GM10248 (cell line): ENCODE measurements at regions of chr20 and their contacts with region 1.

Region 1: GRCh38 chr20:23110970-23111945 is 25.1 kb upstream of the CD93 start:
- DNase-seq: no peak
- CTCF ChIP-seq: no peak

Region 2: GRCh38 chr20:23009636-23010035 is 101.6 kb before region 1 on chr20:
- CTCF ChIA-PET with region 1: no interaction called
- POLR2A ChIA-PET with region 1: no interaction called
- DNase-seq: no peak
- CTCF ChIP-seq: no peak

Region 3: DNA sequence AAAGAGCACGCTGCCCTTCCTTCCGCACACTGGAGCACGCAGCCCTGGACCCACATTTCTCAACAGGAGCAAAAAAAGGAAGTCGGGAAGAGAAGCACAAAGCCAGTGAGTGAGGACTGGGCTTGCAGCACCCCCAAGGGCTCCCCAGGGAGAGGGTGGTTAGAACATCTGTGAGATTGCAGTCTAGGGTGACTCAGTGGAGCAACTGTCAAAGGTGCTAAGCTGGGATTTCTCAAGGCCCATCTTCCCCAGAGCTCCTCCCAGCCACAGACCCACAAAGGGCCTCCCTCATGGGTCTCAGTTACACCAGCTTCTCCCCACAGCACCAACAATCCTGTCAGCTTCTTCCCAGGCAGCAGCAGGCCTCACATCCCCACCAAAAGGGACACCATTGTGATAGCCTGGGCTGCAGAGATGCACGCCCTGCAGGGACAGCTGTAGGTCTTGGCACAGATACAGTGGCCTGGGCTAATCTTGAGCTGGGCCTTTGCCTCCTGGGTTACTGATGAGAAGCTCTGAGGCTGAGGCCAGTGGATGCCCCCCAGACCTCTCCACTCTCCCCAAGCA is 14.4 kb after region 1 on chr20:
- CTCF ChIA-PET with region 1: interaction called, 10 read pairs
- POLR2A ChIA-PET with region 1: no interaction called
- DNase-seq: peak; percentile 40
- CTCF ChIP-seq: no peak

Region 4: DNA sequence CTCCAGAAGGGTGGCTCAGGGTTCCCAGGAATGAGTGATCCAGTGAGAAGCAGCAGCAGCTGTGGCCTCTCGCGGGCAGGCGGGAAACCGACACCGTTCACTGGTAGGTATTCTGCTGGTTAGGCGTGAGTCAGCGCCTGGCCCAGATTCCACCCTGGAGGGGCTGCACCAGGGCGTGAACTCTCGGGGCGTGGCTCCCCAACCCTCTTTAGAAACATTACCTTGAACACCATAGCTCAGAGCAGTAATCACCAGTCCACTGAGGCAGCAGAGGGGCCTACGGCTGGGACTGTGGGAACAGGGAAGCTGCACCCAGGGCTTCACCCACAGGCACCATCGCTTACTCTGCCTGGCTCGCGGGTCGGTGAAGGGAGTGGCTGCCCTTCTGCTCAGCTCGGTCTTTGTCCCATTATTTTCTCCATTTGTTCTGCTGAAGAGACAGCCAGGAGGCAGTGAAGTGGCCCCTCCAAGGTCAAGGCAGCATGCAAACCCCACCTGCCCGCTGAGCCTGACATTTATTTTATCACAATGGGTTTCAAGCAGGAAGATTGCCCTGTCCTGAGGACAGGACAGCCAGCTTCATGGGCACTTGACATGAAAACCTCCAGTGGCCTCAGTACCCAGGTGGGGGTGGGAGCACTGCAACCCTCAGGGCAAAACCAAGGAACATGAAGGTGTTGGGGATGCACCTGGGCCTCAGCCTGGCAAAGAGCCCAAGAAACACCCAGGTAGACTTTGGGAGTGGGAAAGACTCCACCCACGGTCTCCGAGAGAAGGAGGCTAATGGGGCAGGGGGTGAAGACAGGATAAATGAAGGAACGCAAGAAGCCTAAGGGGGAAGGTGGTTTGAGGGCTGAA is 25.9 kb after region 1 on chr20:
- CTCF ChIA-PET with region 1: interaction called, 4 read pairs
- POLR2A ChIA-PET with region 1: interaction called, 15 read pairs
- DNase-seq: no peak
- CTCF ChIP-seq: no peak

Region 5: DNA sequence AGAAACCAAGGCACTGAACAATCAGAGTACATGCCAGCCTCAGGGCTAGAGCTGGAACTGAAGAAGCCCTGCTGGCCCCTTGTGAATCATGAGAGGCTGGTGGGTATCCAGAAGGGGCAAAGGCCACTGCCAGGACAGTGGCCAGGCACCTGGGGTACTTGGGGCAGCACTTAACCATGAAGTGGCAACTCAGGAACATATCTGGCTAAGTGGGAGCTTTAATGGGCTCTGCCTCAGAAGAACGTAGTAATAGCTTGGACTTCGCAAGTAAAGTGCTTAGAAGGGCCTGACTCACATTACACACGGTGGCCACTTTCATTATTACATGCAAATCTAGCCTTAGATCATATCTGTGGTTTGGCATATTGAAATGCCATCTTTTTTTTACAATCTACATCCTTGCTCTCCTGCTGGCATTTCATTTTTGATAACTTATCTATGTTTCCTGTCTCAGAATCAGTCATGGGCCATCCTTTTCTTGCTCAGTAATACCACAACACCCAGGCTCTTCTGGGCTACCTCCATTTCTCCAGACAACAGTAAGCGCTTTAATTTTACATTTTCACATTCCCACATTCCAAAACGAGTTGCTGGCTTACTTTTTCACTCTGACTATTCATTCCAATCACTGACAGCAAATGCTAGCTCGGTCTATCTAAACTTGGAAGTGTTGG is 288.4 kb after region 1 on chr20:
- CTCF ChIA-PET with region 1: no interaction called
- POLR2A ChIA-PET with region 1: no interaction called
- DNase-seq: peak; percentile 32
- CTCF ChIP-seq: no peak